ENCODE measurements at regions of chr12 and their contacts with region 1.

Region 1: DNA sequence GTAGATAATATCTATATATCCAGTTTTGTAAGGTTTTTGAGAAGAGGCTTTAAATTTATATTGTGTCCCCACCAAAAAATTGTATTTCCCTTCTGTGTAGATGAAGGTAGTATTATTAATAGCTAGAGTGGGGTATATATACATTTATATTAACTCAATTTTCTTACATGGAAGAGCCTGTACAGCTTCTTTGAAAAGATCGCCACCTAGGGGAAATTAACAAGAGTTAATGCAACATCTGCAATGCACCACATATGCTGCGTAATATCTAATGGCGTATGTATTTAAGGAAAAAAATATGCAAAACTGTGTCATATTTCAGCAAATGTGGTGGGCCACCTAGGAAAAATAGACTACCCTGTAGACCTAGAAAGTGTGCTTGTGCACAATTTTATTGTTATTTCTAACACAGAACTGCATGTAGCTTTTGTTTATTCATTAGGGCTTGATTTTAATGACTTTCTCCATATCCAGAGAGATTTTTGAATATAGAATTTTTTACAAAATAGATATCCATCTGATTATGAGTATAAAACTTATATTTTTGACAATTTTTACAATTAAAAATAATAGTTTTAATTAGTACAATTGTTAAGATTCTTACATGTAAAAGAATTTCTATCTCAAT is 14.0 kb downstream of the CCER1 start:
- DNase-seq: no peak
- H3K4me3 Mint-ChIP-seq: no peak overlapping the region
- H3K27ac Mint-ChIP-seq: no peak overlapping the region
- H3K4me1 Mint-ChIP-seq: no peaks in the 10 kb centered on the region
- H3K27me3 Mint-ChIP-seq: peaks cover 11% of the 10 kb centered on the region

Region 2: DNA sequence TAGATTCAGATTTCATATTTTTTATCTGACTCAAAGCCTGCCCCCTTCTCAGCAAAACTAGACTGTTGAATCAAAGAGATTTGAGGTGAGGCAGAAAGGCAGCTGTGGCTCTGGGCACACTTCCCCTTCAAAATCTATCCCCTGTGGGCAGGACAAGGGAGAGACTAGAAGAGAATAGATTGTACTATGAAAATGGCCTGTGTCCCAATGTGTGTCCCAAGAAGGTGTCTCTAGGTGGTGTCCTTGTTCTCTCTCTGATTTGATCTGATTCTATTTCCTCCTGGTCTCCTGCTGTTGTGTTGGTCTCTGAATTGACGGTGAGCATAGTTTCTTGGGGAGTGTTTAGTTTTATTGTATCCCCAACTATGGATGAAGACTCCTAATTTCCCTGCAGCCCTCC is 666.6 kb before region 1 on chr12:
- CTCF ChIA-PET with region 1: no interaction called
- intact Hi-C with region 1: loop called (anchors 10 kb)
- DNase-seq: no peak
- H3K4me3 Mint-ChIP-seq: no peak overlapping the region
- H3K27ac Mint-ChIP-seq: no peak overlapping the region
- H3K4me1 Mint-ChIP-seq: no peaks in the 10 kb centered on the region
- H3K27me3 Mint-ChIP-seq: peaks cover 11% of the 10 kb centered on the region

Region 3: DNA sequence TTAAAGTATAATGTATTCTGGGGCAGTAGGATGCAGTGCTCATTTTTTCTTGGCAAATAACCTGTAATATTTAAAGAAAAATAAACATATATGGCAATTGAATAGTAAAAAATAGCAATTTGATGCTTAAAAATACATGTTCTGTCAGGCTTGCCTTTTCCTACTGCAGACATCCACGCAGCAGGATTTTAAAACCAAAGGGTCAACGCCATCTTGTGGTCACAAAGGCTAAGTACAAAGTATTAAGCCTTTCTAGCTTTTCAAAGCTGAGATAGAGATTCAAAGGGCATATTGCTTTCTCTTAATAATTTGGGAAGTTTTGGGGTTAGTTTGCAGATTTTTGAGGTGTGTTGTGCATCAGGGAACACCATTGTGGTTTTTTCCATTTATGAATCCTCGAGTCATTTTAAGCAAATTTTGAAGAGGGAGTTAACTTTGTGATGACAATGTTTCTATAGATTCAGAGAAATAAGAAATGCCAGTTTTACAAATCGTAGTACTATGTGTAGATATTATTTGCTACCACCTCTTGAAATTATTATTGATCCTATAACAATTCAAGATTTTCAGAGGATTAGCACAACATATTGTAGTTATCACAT is 18.7 kb after region 1 on chr12:
- CTCF ChIA-PET with region 1: interaction called, 6 read pairs
- intact Hi-C with region 1: loop called (anchors 1 kb)
- DNase-seq: peak; percentile 29
- H3K4me3 Mint-ChIP-seq: no peak overlapping the region
- H3K27ac Mint-ChIP-seq: no peak overlapping the region
- H3K4me1 Mint-ChIP-seq: no peaks in the 10 kb centered on the region
- H3K27me3 Mint-ChIP-seq: no peaks in the 10 kb centered on the region

Region 4: GRCh38 chr12:91109148-91109564 is 168.2 kb after region 1 on chr12:
- CTCF ChIA-PET with region 1: interaction called, 8 read pairs
- intact Hi-C with region 1: loop called (anchors 1 kb)
- DNase-seq: peak; percentile 74
- H3K4me3 Mint-ChIP-seq: no peak overlapping the region
- H3K27ac Mint-ChIP-seq: no peak overlapping the region
- H3K4me1 Mint-ChIP-seq: no peaks in the 10 kb centered on the region
- H3K27me3 Mint-ChIP-seq: peaks cover 11% of the 10 kb centered on the region

Region 5: GRCh38 chr12:91355150-91356006 is 414.4 kb after region 1 on chr12:
- CTCF ChIA-PET with region 1: interaction called, 5 read pairs
- intact Hi-C with region 1: loop called (anchors 1 kb)
- DNase-seq: peak; percentile 71
- H3K4me3 Mint-ChIP-seq: no peak overlapping the region
- H3K27ac Mint-ChIP-seq: no peak overlapping the region
- H3K4me1 Mint-ChIP-seq: no peaks in the 10 kb centered on the region
- H3K27me3 Mint-ChIP-seq: peaks cover 7% of the 10 kb centered on the region

Measured in activated naive CD4-positive, alpha-beta T cell treated with anti-CD3 and anti-CD28 coated beads for 36 hours (primary cell).